ENCODE measurements at regions of chr22 and their contacts with region 1.

Region 1: DNA sequence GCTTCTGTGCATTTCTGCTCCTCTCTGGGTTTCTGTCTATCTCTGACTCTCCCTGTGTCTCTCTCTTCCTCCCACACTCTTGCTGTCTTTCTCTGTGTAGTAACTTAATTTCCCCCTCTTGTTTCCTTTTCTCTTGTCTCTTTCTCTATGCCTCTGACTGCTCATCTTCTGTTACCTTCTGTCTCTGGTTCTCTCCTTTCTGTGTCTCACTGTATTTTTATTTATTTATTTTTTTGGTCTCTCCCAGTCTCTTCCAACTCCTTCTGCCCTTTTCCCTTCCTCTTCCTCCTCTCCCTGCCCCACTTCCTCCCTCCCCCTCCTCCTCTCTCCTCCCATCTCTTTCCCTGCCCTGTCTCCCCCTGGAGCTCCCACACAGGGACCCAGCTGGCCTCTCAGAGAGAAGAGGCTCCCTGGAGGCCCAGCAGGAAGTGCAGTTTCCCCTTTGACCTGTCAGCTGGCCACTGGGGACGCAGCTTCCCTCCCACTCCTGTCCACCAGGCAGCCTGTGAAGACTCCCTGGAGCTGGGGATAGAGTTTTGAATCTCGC is 38.3 kb upstream of the MYH9 start:
- DNase-seq: no peak
- ATAC-seq: peak; percentile 69
- H3K4me3 ChIP-seq: no peak overlapping the region
- H3K27ac ChIP-seq: peak overlapping the region; percentile 41; the same call in 1 of the 2 replicates
- H3K4me1 ChIP-seq: peaks cover 17 to 46% of the 10 kb centered on the region in 2 experiments
- H3K27me3 ChIP-seq: no peaks in the 10 kb centered on the region
- CTCF ChIP-seq: no peak
- POLR2A ChIP-seq: no peak
- RAD21 ChIP-seq: no peak

Region 2: DNA sequence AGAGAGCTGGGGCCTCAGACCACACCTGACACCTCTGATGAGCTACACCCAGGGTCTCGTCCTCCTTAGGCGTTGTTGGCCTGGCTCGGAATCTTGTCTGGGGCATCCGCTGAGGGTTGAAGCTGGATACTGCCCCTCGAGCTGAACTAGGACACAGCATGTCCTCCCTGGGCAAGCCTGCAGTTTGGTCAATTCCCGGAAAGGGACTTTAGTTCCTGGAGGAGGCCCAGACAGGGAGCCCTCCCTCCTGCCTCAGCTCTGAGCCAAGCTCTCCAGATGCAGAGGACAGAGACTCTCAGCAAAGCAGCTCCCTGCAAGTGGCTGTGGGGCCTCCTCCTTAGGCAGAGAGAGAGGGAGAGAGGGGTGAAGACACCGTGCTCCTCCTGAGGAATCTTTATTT is 270.3 kb before region 1 on chr22:
- CTCF ChIA-PET with region 1: no interaction called
- POLR2A ChIA-PET with region 1: no interaction called
- RAD21 ChIA-PET with region 1: no interaction called
- intact Hi-C with region 1: no loop called
- DNase-seq: no peak
- ATAC-seq: no peak
- H3K4me3 ChIP-seq: no peak overlapping the region
- H3K27ac ChIP-seq: no peak overlapping the region
- H3K4me1 ChIP-seq: peaks cover 0 to 3% of the 10 kb centered on the region in 2 experiments; a peak in 1 of 4 replicates
- H3K27me3 ChIP-seq: no peaks in the 10 kb centered on the region
- CTCF ChIP-seq: no peak
- POLR2A ChIP-seq: no peak
- RAD21 ChIP-seq: no peak

Region 3: DNA sequence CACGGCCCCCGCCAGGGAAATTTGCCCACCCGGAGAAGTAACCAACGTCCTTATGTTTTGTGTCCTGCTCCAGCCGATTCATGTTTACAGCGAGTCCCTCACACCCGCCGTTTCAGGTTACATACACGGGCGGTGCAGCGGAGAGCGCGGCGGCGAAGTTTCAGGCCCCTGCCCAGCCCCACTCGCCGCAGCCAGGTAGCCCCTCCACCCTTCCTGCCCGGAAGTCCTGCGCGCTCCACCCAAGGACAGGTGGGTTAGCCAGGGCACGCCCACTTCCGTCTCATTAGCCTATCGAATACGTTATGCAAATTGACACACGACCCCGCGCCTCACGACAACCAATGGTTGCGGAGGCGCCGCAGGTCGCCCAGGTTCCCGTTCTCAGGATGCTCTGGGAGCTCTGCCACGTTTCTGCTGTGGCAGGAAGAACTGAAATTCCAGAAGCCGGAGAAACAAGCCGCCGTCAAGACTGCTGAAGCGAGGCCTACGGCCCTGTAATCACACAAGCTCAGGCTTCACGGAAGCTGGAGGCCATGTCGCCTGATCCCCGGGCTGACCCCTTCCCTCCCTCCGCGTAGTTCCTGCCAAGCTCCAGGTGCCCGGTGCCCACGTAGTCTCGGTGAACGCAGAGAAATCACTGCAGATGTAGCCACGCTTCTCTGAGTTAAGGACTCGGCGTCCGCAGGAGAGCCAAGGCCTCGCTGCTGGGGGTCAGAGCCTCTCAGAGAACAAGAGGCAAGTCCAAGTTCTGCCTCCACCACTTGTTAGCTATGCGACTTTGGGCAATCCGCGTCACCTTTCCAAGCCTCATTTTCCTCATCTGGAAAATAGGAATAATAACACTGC is 15.9 kb before region 1 on chr22:
- CTCF ChIA-PET with region 1: interaction called, 3 read pairs
- POLR2A ChIA-PET with region 1: interaction called, 11 read pairs
- RAD21 ChIA-PET with region 1: no interaction called
- intact Hi-C with region 1: no loop called
- DNase-seq: peak; percentile 96
- ATAC-seq: peak; percentile 96
- H3K4me3 ChIP-seq: peak overlapping the region; percentile 79 to 80
- H3K27ac ChIP-seq: peak overlapping the region; percentile 86
- H3K4me1 ChIP-seq: peaks cover 29 to 43% of the 10 kb centered on the region in 2 experiments
- H3K27me3 ChIP-seq: no peaks in the 10 kb centered on the region
- CTCF ChIP-seq: peak in 2 of 3 experiments; percentile 29 to 32; a peak in 3 of 6 replicates
- POLR2A ChIP-seq: peak; percentile 72
- RAD21 ChIP-seq: no peak

Region 4: GRCh38 chr22:36506637-36507517 is 80.8 kb after region 1 on chr22 and contains the start of gene FOXRED2:
- CTCF ChIA-PET with region 1: no interaction called
- POLR2A ChIA-PET with region 1: no interaction called
- RAD21 ChIA-PET with region 1: no interaction called
- intact Hi-C with region 1: no loop called
- DNase-seq: no peak
- ATAC-seq: peak; percentile 85
- H3K4me3 ChIP-seq: peak within 1 kb of the TSS; percentile 36 to 55
- H3K27ac ChIP-seq: peak within 1 kb of the TSS; percentile 67
- H3K4me1 ChIP-seq: peaks cover 6 to 21% of the 10 kb centered on the region in 2 experiments; a peak in 3 of 4 replicates
- H3K27me3 ChIP-seq: no peaks in the 10 kb centered on the region
- CTCF ChIP-seq: no peak
- POLR2A ChIP-seq: peak; percentile 75
- RAD21 ChIP-seq: no peak
- total RNA-seq, gene FOXRED2: 19.9 TPM